ENCODE measurements at regions of chr15 and their contacts with region 1.

Region 1: DNA sequence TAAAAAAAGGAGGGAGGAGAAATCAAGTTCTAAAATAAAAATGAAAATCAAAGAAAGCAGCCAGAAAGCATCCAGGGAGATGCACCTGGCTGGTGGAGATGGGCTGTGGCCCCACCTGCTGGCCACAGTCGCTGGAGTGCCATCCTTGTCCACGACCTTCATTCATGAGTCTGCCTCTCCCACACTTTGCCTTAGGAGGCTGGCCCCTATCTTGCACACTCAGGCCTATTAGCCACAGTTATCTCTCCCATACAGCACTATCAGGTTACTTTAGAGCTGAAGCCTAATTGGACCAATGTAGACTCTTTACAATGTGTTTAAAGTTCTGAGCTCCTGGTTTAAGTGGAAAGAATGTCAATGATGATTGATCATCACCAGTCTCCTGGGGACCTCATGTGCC is 392.0 kb upstream of the RORA start:
- DNase-seq: peak; percentile 69 to 82 (median 74)
- ATAC-seq: peak; percentile 98
- H3K4me3 ChIP-seq: no peak overlapping the region
- H3K27ac ChIP-seq: no peak overlapping the region
- H3K4me1 ChIP-seq: peaks cover 0 to 5% of the 10 kb centered on the region in 2 experiments; a peak in 2 of 5 replicates
- H3K27me3 ChIP-seq: peaks cover 0 to 11% of the 10 kb centered on the region in 2 experiments; a peak in 2 of 5 replicates
- CTCF ChIP-seq: peak; percentile 63 to 75 (median 65)
- EP300 ChIP-seq: peak; percentile 84
- POLR2A ChIP-seq: no peak
- RAD21 ChIP-seq: peak; percentile 19 to 56; a peak in 3 of 4 replicates

Region 2: DNA sequence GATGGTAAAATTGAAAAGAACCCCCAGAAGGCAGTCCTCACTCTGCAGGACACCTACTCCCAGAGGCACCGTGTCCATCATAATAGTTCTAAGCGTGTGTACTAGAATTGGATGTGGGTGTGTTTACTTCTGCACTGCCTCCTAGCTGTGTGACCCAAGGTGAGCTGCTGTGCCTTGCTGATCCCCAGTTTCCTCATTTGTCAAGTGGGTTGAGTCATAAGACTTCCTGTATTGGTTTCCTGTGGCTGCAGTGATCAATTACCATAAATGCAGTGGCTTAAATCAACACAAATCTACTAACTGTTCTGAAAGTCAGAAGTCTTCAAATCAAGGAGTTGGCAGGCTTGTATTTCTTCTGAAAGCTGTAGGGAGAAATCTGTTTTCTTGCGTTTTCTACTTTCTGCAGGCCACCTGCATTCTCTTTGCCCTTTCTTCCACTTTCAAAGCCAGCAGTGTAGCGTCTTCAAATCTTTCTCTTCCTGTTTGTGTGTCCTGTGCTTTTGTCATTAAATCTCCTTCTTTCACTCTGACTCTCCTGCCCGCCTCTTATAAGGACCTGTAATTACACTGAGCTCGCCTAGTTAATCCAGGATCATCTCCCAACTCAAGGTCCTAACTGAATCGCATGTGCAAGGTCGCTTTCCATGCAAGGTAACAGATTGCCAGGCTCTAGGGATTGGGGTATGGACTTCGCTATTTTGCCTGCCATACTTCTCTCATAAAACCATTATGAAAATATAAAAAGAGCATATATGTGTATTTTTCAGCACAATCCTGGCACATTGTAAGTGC is 451.0 kb before region 1 on chr15:
- CTCF ChIA-PET with region 1: no interaction called
- POLR2A ChIA-PET with region 1: no interaction called
- in situ Hi-C with region 1: loop called (anchors 10 kb)
- intact Hi-C with region 1: no loop called
- DNase-seq: no peak
- ATAC-seq: no peak
- H3K4me3 ChIP-seq: no peak overlapping the region
- H3K27ac ChIP-seq: no peak overlapping the region
- H3K4me1 ChIP-seq: no peaks in the 10 kb centered on the region
- H3K27me3 ChIP-seq: no peaks in the 10 kb centered on the region
- CTCF ChIP-seq: no peak
- EP300 ChIP-seq: no peak
- POLR2A ChIP-seq: no peak
- RAD21 ChIP-seq: no peak

Region 3: GRCh38 chr15:61195116-61196002 is 425.8 kb before region 1 on chr15:
- CTCF ChIA-PET with region 1: no interaction called
- POLR2A ChIA-PET with region 1: no interaction called
- in situ Hi-C with region 1: no loop called
- intact Hi-C with region 1: loop called (anchors 2 kb)
- DNase-seq: peak; percentile 44 to 60 (median 50)
- ATAC-seq: peak; percentile 84
- H3K4me3 ChIP-seq: no peak overlapping the region
- H3K27ac ChIP-seq: no peak overlapping the region
- H3K4me1 ChIP-seq: no peaks in the 10 kb centered on the region
- H3K27me3 ChIP-seq: peaks cover 6 to 15% of the 10 kb centered on the region in 2 experiments; a peak in 4 of 5 replicates
- CTCF ChIP-seq: peak; percentile 51 to 72 (median 69); a peak in 5 of 6 replicates
- EP300 ChIP-seq: no peak
- POLR2A ChIP-seq: no peak
- RAD21 ChIP-seq: peak; percentile 29 to 55; a peak in 3 of 4 replicates

Measured in K562 (cell line).